ENCODE measurements at regions of chr9 and their contacts with region 1.

Region 1: GRCh38 chr9:37800631-37801286 is at the start of gene DCAF10:
- DNase-seq: peak; percentile 82
- H3K4me3 Mint-ChIP-seq: peak within 1 kb of the TSS; percentile 88
- H3K27ac Mint-ChIP-seq: peak within 1 kb of the TSS; percentile 50
- H3K4me1 Mint-ChIP-seq: peaks cover 21% of the 10 kb centered on the region
- H3K27me3 Mint-ChIP-seq: no peaks in the 10 kb centered on the region
- CTCF ChIP-seq: no peak
- total RNA-seq, gene DCAF10: 42.1 and 49.4 TPM in 2 replicates

Region 2: DNA sequence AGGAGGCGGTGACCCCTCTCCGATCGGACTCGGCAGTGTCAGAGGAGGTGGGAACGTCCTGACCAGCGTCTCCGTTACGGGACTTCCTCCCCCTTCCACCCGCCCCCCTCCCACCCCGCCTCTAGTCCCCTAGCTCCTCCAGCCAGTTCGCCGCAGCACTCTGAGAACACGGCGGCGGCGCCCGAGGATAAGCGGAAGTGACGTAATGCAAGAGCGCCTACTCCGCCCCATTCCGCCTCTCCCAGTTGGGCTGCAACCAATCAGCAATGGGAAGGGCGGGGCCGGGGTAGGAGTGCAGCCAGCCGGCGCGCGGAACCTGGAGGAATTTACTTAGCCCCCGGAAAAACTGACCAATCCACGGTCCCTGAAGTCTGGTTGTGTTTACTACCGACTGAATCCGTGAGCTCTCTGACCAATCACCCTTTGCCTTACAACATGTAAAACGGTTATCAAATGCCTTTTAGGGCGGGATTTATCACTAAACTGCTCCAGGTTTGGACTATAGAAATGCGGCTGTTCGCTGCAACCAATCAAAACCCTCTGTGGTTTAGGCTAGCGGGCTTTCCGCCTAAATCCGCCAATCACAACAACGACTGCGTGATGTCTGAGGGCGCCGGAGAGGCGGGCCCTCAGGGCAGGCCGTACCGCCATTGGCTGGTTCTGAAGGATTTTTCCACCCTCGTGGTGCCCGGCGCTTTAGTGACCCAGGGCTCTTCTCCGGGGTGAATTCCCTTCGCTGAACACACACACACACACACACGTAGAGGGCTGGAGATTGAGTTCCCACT is 335.3 kb before region 1 on chr9 and contains the start of gene ZBTB5:
- CTCF ChIA-PET with region 1: no interaction called
- POLR2A ChIA-PET with region 1: interaction called, 10 read pairs
- intact Hi-C with region 1: no loop called
- DNase-seq: peak; percentile 99
- H3K4me3 Mint-ChIP-seq: peak within 1 kb of the TSS; percentile 92
- H3K27ac Mint-ChIP-seq: peak within 1 kb of the TSS; percentile 95
- H3K4me1 Mint-ChIP-seq: peaks cover 22% of the 10 kb centered on the region
- H3K27me3 Mint-ChIP-seq: no peaks in the 10 kb centered on the region
- CTCF ChIP-seq: no peak
- total RNA-seq, gene ZBTB5: 8.9 and 9.0 TPM in 2 replicates

Region 3: DNA sequence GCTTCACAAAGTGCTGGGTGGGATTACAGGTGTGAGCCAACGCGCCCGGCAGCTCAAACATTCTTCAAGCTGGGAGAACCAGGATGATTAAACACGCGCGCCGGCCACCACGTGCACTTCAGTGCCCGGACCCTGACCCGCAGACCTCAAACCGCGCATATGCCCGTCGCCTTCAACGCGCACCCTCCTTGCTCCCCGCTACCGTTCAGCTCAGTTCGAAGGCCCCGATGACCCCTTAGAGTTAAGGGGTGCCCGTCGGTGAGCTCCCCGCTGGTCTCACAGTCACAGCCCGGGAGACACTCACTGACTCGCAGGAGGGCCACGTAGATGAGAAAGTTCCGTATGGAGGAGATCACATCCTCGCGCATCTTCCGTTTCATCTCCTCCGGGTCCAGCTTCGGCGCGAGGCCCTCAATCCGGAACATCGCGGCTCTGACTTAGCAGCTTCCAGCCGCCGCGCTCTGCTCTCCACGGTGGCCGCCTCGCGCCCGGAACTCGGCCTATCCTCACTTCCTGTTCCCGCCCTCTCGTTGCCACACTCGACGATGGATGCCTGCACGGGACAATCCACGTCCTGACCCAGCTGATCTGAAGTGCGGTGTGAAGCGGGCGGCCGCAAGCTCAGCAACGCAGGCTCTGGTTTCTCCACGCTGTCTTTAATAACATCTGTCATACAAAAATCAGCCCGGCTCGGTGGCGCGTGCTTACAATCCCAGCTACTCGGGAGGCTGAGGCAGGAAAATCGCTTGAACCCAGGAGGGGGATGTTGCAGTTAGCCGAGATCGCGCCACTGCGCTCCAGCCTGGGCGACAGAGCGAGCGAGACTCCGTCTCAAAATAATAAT is 208.4 kb before region 1 on chr9 and contains the start of gene TOMM5:
- CTCF ChIA-PET with region 1: interaction called, 4 read pairs
- POLR2A ChIA-PET with region 1: interaction called, 18 read pairs
- intact Hi-C with region 1: no loop called
- DNase-seq: peak; percentile 93
- H3K4me3 Mint-ChIP-seq: peak within 1 kb of the TSS; percentile 96
- H3K27ac Mint-ChIP-seq: peak within 1 kb of the TSS; percentile 98
- H3K4me1 Mint-ChIP-seq: peaks cover 16% of the 10 kb centered on the region
- H3K27me3 Mint-ChIP-seq: no peaks in the 10 kb centered on the region
- CTCF ChIP-seq: no peak
- total RNA-seq, gene TOMM5: 151 and 164 TPM in 2 replicates

Region 4: GRCh38 chr9:37776328-37776727 is 24.4 kb before region 1 on chr9:
- CTCF ChIA-PET with region 1: no interaction called
- POLR2A ChIA-PET with region 1: interaction called, 16 read pairs
- intact Hi-C with region 1: no loop called
- DNase-seq: peak; percentile 14
- H3K4me3 Mint-ChIP-seq: no peak overlapping the region
- H3K27ac Mint-ChIP-seq: no peak overlapping the region
- H3K4me1 Mint-ChIP-seq: no peaks in the 10 kb centered on the region
- H3K27me3 Mint-ChIP-seq: no peaks in the 10 kb centered on the region
- CTCF ChIP-seq: no peak

Region 5: GRCh38 chr9:37784616-37785483 is 15.9 kb before region 1 on chr9 and contains the start of gene EXOSC3:
- CTCF ChIA-PET with region 1: interaction called, 5 read pairs
- POLR2A ChIA-PET with region 1: interaction called, 121 read pairs
- intact Hi-C with region 1: no loop called
- DNase-seq: peak; percentile 91
- H3K4me3 Mint-ChIP-seq: peak within 1 kb of the TSS; percentile 98
- H3K27ac Mint-ChIP-seq: peak within 1 kb of the TSS; percentile 98
- H3K4me1 Mint-ChIP-seq: peaks cover 12% of the 10 kb centered on the region
- H3K27me3 Mint-ChIP-seq: no peaks in the 10 kb centered on the region
- CTCF ChIP-seq: no peak
- total RNA-seq, gene EXOSC3: 44.8 and 50.9 TPM in 2 replicates

Region 6: DNA sequence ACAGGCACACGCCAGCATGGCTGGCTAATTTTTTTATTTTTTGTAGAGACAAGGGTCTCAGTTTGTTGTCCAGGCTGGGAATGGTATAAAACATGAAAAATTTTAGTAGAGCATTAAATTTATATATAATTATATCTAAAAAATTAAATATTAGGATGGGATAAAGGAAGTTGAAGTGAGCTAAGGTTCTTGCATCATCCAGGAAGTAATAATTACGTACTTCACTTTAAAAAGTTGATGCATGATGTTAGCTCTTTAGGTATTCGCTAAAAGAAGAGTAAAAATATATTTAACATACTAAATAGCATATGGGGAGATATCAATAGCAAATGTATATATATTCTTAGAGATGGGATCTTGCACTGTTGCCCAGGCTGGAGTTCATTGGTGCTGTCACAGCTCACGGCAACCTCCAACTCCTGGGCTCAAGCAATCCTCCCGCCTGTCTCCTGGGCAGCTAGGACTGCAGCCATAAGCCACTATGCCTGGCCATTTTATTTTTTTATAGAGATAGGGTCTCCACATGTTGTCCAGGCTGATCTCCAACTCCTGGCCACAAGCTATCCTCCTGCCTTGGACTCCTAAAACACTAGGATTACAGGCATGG is 12.1 kb after region 1 on chr9:
- CTCF ChIA-PET with region 1: interaction called, 3 read pairs
- POLR2A ChIA-PET with region 1: interaction called, 11 read pairs
- intact Hi-C with region 1: no loop called
- DNase-seq: no peak
- H3K4me3 Mint-ChIP-seq: no peak overlapping the region
- H3K27ac Mint-ChIP-seq: no peak overlapping the region
- H3K4me1 Mint-ChIP-seq: peaks cover 5% of the 10 kb centered on the region
- H3K27me3 Mint-ChIP-seq: no peaks in the 10 kb centered on the region
- CTCF ChIP-seq: no peak

Region 7: DNA sequence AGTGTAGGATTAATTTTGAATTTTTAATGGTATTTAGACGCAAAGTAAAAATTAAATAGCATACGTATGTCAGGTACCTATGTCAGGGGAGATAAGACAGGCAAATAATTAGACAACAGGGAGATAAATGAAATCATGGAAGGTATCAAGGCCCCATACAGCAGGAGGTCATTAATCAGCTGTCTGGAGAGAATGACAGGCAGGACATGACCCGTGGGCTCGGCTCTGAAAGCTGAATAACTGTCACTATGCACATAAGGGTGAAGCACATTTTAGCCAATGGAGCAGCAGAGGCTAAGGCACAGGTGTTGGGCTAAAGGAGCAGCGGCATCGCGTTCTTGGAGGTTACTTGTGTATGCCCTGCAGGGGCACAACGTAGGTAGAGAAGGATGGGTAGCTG is 91.3 kb after region 1 on chr9:
- CTCF ChIA-PET with region 1: no interaction called
- POLR2A ChIA-PET with region 1: no interaction called
- intact Hi-C with region 1: no loop called
- DNase-seq: no peak
- H3K4me3 Mint-ChIP-seq: no peak overlapping the region
- H3K27ac Mint-ChIP-seq: no peak overlapping the region
- H3K4me1 Mint-ChIP-seq: no peaks in the 10 kb centered on the region
- H3K27me3 Mint-ChIP-seq: no peaks in the 10 kb centered on the region
- CTCF ChIP-seq: no peak

Region 8: DNA sequence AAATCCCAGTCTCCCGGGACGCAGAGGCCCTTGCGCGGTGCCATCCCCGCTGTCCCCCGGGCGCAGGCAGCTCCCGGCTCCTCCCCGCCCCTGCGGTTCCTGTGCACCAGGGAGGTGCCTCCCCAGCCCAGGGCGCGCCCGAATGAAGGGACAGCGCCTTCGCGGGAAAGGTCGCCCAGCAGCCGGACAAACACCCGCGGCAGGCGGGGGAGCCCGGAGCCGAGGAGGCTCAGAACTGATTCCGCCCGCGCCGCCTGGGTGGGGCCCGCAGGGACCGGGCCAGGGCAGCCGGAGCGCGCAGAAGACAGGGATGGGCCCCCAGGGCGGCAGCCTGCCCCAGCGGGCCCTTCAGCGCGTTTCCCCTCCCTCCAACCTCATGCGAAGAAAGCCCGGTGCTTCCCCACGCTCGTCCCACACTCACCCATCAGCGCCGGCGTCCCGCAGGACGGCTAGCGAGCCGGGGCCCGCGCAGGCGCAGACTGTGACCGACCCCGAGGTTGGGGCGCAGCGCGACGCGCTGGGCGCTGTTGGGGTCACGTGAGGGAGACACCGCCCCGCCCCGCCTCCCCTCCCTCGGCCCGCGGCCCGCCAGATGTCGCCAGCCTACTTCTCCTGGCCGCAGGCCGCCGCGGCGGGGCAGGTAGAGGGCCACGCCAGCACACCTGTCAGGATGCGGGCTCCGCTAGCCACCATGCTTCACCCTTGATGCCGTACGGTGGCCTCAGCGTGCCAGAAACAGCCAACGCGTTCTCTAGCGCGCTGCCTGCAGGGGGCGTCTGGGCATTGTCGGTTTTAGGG is 103.1 kb after region 1 on chr9 and contains the start of gene SLC25A51:
- CTCF ChIA-PET with region 1: no interaction called
- POLR2A ChIA-PET with region 1: interaction called, 16 read pairs
- intact Hi-C with region 1: no loop called
- DNase-seq: peak; percentile 93
- H3K4me3 Mint-ChIP-seq: peak within 1 kb of the TSS; percentile 80
- H3K27ac Mint-ChIP-seq: peak within 1 kb of the TSS; percentile 95
- H3K4me1 Mint-ChIP-seq: peaks cover 30% of the 10 kb centered on the region
- H3K27me3 Mint-ChIP-seq: no peaks in the 10 kb centered on the region
- CTCF ChIP-seq: peak; percentile 93
- total RNA-seq, gene SLC25A51: 29.6 and 30.3 TPM in 2 replicates